MCF 10A (cell line): ENCODE measurements at regions of chr11 and their contacts with region 1.

Region 1: GRCh38 chr11:125941619-125942611 is 3.9 kb upstream of the VSIG10L2 start:
- DNase-seq: peak; percentile 61
- H3K4me3 Mint-ChIP-seq: no peak overlapping the region
- H3K27ac Mint-ChIP-seq: peak overlapping the region; percentile 32
- H3K4me1 Mint-ChIP-seq: peaks cover 9% of the 10 kb centered on the region
- H3K27me3 Mint-ChIP-seq: no peaks in the 10 kb centered on the region
- CTCF ChIP-seq: peak; percentile 70

Region 2: DNA sequence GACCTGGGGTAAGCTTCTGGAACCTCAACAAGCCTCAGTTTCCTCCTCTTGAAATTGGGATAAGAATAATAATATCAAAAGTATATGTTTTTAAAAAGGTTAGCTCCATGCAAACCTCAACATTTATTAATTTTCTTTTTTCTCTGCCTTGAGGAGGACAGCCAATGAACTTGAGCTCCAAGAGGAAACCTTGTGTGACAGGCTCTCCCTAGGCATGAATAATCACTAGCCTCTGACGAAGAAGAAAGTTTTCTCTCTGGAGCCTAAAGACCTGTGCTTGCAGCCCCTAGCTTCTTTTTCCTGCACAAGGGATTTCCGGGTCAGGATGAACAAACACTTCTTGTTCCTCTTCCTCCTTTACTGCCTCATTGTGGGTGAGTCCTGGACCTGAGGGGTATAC is 154.1 kb before region 1 on chr11 and contains the start of gene PATE3:
- CTCF ChIA-PET with region 1: no interaction called
- POLR2A ChIA-PET with region 1: no interaction called
- intact Hi-C with region 1: no loop called
- DNase-seq: no peak
- H3K4me3 Mint-ChIP-seq: no peak within 1 kb of the TSS
- H3K27ac Mint-ChIP-seq: no peak within 1 kb of the TSS
- H3K4me1 Mint-ChIP-seq: no peaks in the 10 kb centered on the region
- H3K27me3 Mint-ChIP-seq: no peaks in the 10 kb centered on the region
- CTCF ChIP-seq: no peak
- total RNA-seq, gene PATE3: not detected in 2 replicates

Region 3: DNA sequence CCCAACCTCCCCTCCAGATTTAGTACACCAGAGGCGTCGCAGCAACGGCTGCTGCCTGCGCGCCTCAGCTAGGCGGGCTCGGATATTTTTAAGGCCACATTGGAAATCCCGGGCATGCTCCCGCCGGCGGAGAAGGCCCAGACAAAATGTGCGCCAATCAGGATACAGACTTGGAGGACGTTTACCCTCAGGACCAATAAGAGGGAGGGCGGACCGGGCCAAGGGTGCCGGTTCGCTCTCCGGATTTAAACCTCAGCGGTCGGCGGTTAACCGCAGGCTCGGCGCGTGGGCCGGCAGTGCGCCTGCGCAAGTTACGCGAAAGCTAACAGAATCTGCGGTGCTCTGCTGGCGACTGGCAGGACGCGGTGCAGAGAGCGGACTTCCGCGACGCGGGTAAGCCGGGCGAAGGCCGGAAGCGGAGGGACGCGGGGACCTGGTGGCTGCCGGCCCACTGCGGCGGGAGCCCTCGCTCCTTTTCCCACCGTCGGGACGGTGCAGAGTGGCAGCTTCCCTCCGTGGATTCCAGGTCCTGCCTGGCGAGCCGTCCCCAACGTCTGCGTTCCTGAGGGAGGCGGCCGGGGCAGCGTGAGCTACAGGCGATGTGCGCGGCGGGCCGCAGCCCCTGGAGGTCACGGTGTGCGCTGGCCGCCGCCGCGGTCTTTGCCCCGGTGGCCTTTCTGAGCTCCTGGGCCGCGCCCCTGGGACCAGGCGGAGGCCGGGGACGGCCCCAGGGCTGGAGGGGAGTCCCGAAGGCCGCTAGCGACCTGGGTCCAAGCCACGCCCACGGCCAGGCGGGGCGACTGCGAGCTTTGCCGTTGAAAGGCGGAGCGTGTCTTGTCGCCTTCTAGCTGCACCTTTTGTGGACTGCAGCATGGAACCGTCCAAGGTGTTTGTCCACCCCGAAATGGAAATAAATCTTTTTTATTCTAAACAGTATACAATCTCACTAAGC is 54.3 kb before region 1 on chr11 and contains the start of gene HYLS1:
- CTCF ChIA-PET with region 1: no interaction called
- POLR2A ChIA-PET with region 1: no interaction called
- intact Hi-C with region 1: no loop called
- DNase-seq: peak; percentile 96
- H3K4me3 Mint-ChIP-seq: peak within 1 kb of the TSS; percentile 83
- H3K27ac Mint-ChIP-seq: peak within 1 kb of the TSS; percentile 70
- H3K4me1 Mint-ChIP-seq: peaks cover 15% of the 10 kb centered on the region
- H3K27me3 Mint-ChIP-seq: no peaks in the 10 kb centered on the region
- CTCF ChIP-seq: no peak
- total RNA-seq, gene HYLS1: 7.9 and 10.2 TPM in 2 replicates

Region 4: DNA sequence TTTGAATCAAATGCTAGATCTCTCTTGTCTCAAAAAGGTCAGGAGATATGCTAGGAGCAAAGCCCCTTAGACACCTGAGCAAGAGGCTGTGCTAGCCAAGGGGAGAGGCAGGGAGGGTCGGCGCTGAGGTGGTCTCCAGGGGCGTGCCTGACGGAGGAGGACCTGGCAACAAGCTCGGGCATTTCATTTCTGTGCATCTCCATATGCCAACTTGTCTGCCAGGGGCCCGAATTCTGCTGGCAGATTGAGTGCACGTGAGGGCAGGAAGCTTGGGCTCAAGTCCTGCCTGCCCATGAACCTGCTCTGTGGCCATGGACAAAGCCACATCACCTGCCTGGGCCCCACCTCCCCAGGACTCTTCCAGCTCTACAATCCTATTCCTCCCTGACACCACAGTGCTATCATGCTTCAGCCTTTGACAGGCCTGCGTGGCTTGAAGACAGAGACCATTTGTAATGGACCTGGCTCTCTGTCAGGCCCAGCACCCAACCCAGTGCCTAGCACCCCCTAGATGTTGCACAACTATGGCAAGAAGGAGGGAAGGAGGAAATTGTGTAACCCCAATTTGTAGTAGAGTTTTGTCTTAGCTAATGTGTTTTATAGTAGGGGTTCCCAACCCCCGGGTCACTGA is 12.4 kb before region 1 on chr11:
- CTCF ChIA-PET with region 1: interaction called, 30 read pairs
- POLR2A ChIA-PET with region 1: no interaction called
- intact Hi-C with region 1: no loop called
- DNase-seq: no peak
- H3K4me3 Mint-ChIP-seq: no peak overlapping the region
- H3K27ac Mint-ChIP-seq: no peak overlapping the region
- H3K4me1 Mint-ChIP-seq: peaks cover 8% of the 10 kb centered on the region
- H3K27me3 Mint-ChIP-seq: peaks cover 35% of the 10 kb centered on the region
- CTCF ChIP-seq: no peak

Region 5: GRCh38 chr11:126011265-126011664 is 69.3 kb after region 1 on chr11:
- CTCF ChIA-PET with region 1: interaction called, 16 read pairs
- POLR2A ChIA-PET with region 1: interaction called, 3 read pairs
- intact Hi-C with region 1: no loop called
- DNase-seq: no peak
- H3K4me3 Mint-ChIP-seq: no peak overlapping the region
- H3K27ac Mint-ChIP-seq: no peak overlapping the region
- H3K4me1 Mint-ChIP-seq: peaks cover 13% of the 10 kb centered on the region
- H3K27me3 Mint-ChIP-seq: no peaks in the 10 kb centered on the region
- CTCF ChIP-seq: no peak

Region 6: GRCh38 chr11:126115816-126116331 is 174.0 kb after region 1 on chr11:
- CTCF ChIA-PET with region 1: interaction called, 11 read pairs
- POLR2A ChIA-PET with region 1: interaction called, 6 read pairs
- intact Hi-C with region 1: no loop called
- DNase-seq: peak; percentile 71
- H3K4me3 Mint-ChIP-seq: no peak overlapping the region
- H3K27ac Mint-ChIP-seq: peak overlapping the region; percentile 14
- H3K4me1 Mint-ChIP-seq: peaks cover 24% of the 10 kb centered on the region
- H3K27me3 Mint-ChIP-seq: no peaks in the 10 kb centered on the region
- CTCF ChIP-seq: no peak